CD4-positive, alpha-beta memory T cell (primary cell): ENCODE measurements at regions of chr9 and their contacts with region 1.

Region 1: GRCh38 chr9:93159601-93160471 is 24.1 kb upstream of the WNK2 start:
- DNase-seq: peak; percentile 45 to 58 (median 49)
- H3K4me3 ChIP-seq: no peak overlapping the region
- H3K4me3 Mint-ChIP-seq: no peak overlapping the region
- H3K27ac ChIP-seq: no peak overlapping the region
- H3K27ac Mint-ChIP-seq: peak overlapping the region in 3 of 7 donors; percentile 17 to 66 (median 43)
- H3K4me1 ChIP-seq: peaks cover 14% of the 10 kb centered on the region
- H3K4me1 Mint-ChIP-seq: peaks cover 9 to 17% (median 10%) of the 10 kb centered on the region in 4 donors
- H3K27me3 ChIP-seq: no peaks in the 10 kb centered on the region
- H3K27me3 Mint-ChIP-seq: no peaks in the 10 kb centered on the region

Region 2: DNA sequence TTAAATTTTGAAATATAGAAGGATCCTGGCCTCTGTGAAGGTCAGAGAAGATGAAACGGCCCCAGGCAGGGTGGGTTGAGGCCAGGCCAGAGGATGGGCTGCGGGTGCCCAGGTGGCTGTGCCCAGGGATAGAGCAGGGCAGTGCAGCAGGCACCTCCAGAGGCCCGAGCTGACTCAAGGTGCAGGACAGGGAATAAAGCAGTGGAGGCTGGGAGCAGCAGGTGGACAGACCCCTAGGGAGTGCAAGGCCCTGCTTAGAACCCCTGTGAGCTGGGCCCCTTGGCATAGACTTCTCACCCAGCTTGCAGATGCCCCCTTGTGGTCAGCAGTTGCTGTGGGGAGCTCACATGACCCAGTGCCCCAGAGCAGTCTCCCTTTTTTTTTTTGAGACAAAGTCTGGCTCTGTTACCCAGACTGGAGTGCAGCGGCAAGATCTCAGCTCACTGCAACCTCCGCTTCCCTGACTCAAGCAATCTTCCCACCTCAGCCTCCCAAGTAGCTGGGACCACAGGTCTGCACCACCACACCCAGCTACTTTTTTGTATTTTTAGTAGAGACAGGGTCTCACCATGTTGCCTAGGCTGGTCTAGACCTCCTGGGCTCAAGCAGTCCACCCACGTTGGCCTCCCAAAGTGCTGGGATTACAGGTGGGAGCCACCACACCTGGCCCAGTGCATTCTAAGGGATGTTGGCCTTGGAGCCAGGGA is 142.9 kb after region 1 on chr9:
- CTCF ChIA-PET with region 1: interaction called, 12 read pairs
- POLR2A ChIA-PET with region 1: no interaction called
- intact Hi-C with region 1: loop called (anchors 1 kb)
- DNase-seq: peak; percentile 46 to 62 (median 57)
- H3K4me3 ChIP-seq: no peak overlapping the region
- H3K4me3 Mint-ChIP-seq: no peak overlapping the region
- H3K27ac ChIP-seq: no peak overlapping the region
- H3K27ac Mint-ChIP-seq: peak overlapping the region in 1 of 7 donors; percentile 65
- H3K4me1 ChIP-seq: no peaks in the 10 kb centered on the region
- H3K4me1 Mint-ChIP-seq: peaks cover 0 to 4% (median 0%) of the 10 kb centered on the region in 4 donors
- H3K27me3 ChIP-seq: no peaks in the 10 kb centered on the region
- H3K27me3 Mint-ChIP-seq: no peaks in the 10 kb centered on the region